ENCODE measurements at regions of chr6 and their contacts with region 1.

Region 1: DNA sequence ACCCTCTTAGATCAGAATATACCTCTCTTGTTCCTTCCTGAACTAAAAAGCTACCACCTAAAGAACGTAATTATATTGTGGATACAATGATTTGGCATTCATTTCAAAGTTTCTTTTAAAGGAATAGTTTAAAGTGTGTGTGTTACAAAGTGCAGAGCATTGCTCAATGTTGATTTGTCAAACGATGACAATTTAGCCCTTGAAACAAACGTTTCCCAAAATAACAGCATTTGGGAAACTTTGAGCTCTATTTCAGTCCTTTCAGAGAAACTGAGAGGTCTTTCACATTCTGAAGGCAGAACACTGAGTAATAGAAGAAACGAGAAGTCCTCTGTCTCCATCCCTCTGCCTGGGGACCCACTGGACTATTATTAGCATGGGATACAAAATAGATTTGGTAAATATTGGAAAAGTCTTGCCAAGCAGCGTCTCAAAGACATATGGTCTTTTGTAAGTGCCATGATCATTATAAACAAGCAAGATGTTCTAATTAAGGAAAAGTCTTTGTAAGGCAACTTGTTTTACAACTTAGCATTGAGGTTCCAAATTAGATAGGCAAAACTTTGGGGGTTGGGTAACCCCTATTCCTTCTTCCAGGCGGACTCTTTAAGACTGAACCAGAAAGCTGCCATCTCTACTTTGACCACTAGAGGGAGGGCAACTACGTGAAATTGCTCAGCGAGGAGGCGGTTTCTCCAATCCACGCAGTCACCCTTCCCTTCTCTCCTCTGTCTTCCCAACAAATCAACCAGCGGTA is 208.8 kb downstream of the RNF144B start:
- DNase-seq: no peak
- ATAC-seq: peak; percentile 89
- H3K4me3 ChIP-seq: no peak overlapping the region
- H3K27ac ChIP-seq: no peak overlapping the region
- H3K4me1 ChIP-seq: no peaks in the 10 kb centered on the region
- H3K27me3 ChIP-seq: no peaks in the 10 kb centered on the region
- CTCF ChIP-seq: peak; percentile 84 to 95 (median 92)
- EP300 ChIP-seq: no peak
- POLR2A ChIP-seq: no peak
- RAD21 ChIP-seq: peak; percentile 78

Region 2: DNA sequence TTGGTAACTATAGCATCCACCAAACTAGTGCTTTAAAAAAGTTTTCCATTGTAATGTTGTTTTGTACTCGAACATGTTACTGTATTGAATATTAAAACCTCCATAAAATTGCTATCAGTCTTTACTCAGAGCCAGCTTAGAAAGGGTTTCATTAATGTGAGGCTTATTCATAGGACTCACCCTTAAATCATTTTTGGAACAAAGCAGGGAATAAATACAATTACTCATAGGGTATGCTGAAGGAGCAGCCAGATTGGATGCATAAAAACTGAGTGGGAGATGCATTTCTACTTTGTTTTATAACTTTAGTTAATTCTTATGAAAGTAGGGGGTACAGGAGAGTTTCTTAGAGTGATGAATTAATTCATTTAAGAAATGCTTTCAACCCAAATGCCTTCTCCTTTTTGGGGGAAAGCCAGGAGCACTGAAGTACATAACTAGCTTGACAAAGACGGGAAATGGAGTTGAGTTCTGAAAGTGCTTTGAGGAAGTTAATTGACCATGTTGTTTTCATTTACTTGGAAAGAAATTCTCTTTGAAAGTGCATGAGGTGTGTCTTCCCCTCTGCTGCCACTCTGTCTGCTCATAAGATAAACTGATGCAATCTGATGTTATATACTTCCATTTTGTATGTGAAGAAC is 118.5 kb before region 1 on chr6:
- CTCF ChIA-PET with region 1: no interaction called
- POLR2A ChIA-PET with region 1: no interaction called
- RAD21 ChIA-PET with region 1: no interaction called
- SMC1A ChIA-PET with region 1: no interaction called
- in situ Hi-C with region 1: no loop called
- intact Hi-C with region 1: no loop called
- DNase-seq: no peak
- ATAC-seq: 0 out of 3 replicates have a peak, but pooled peaks have one; percentile 24
- H3K4me3 ChIP-seq: no peak overlapping the region
- H3K27ac ChIP-seq: no peak overlapping the region
- H3K4me1 ChIP-seq: no peaks in the 10 kb centered on the region
- H3K27me3 ChIP-seq: no peaks in the 10 kb centered on the region; a peak in 1 of 4 replicates
- CTCF ChIP-seq: no peak
- EP300 ChIP-seq: no peak
- POLR2A ChIP-seq: no peak
- RAD21 ChIP-seq: no peak

Region 3: GRCh38 chr6:18579869-18580268 is 16.1 kb before region 1 on chr6:
- CTCF ChIA-PET with region 1: interaction called, 14 read pairs
- POLR2A ChIA-PET with region 1: interaction called, 4 read pairs
- RAD21 ChIA-PET with region 1: interaction called, 4 read pairs
- SMC1A ChIA-PET with region 1: interaction called, 3 read pairs
- in situ Hi-C with region 1: no loop called
- intact Hi-C with region 1: no loop called
- DNase-seq: no peak
- ATAC-seq: peak; percentile 48
- H3K4me3 ChIP-seq: no peak overlapping the region
- H3K27ac ChIP-seq: no peak overlapping the region
- H3K4me1 ChIP-seq: no peaks in the 10 kb centered on the region
- H3K27me3 ChIP-seq: no peaks in the 10 kb centered on the region; a peak in 2 of 4 replicates
- CTCF ChIP-seq: no peak
- EP300 ChIP-seq: no peak
- POLR2A ChIP-seq: no peak
- RAD21 ChIP-seq: no peak

Region 4: DNA sequence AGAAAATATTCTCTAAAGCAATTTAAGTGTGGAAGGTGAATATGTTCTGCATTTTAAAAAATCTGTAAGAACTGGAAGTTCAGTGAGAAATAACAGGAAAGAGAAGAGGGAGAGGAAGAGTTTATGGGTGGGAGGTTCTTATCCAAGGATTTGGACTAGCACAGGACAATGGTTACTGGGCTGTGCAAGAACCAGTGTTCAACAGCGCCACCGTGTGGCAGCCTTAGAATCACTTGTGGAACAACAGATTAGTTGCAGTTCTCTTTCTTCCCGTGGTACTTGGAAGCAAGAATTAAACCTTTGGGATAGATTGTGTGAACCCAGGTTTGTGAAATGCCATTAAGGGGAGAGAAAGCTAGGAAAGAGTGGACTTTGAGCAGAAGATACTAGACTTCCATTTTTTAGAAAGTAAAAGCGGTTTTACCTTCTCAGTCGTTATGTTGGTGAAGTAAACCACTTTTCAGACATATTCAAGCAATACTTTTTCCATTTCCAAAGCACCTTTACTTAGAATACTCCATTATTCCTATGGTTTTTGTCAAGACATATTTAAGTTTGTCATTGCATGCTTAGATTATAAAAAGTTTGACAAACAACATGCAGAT is 227.9 kb after region 1 on chr6:
- CTCF ChIA-PET with region 1: interaction called, 6 read pairs
- POLR2A ChIA-PET with region 1: no interaction called
- RAD21 ChIA-PET with region 1: no interaction called
- SMC1A ChIA-PET with region 1: no interaction called
- in situ Hi-C with region 1: no loop called
- intact Hi-C with region 1: loop called (anchors 1 kb)
- DNase-seq: no peak
- ATAC-seq: no peak
- H3K4me3 ChIP-seq: no peak overlapping the region
- H3K27ac ChIP-seq: no peak overlapping the region
- H3K4me1 ChIP-seq: no peaks in the 10 kb centered on the region
- H3K27me3 ChIP-seq: no peaks in the 10 kb centered on the region
- CTCF ChIP-seq: peak; percentile 35 to 49 (median 41); a peak in 5 of 6 replicates
- EP300 ChIP-seq: no peak
- POLR2A ChIP-seq: no peak
- RAD21 ChIP-seq: no peak

Region 5: DNA sequence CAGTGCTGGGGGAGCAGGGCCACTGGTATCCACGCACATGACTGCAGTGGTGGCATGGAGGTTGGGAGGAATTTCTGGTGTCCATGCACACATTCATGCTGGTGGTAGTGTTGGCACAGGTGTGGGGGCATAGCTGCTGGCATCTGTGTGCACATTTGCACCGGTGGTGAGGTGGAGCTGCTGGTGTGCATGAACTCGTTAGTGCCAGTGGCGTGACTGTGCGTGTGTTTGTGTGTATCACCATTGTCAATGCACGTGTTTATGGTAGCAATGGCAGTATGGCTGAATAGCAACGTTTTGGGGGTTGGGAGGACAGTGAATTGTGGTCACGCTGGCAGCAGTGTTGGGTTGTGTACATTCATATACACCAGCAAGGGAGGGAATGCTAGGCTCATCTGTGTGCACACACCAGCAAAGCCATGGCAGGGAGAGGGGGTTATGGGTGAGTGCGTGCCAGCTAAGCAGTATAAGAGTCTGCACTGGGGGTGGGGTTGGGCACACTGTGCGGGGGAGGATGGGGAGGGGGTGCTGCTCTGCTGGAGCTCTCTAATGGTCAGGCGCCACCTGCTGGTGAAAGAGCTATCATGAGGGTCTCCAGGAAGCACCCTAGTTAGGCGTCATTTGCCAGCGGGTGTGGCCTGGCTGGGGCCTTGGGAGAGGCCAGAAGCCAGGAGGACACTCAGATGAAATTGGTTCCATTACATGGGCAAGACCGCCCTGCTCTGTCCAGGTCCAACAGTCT is 615.1 kb after region 1 on chr6:
- CTCF ChIA-PET with region 1: interaction called, 8 read pairs
- POLR2A ChIA-PET with region 1: no interaction called
- RAD21 ChIA-PET with region 1: interaction called, 5 read pairs
- SMC1A ChIA-PET with region 1: no interaction called
- in situ Hi-C with region 1: no loop called
- intact Hi-C with region 1: loop called (anchors 5 kb)
- DNase-seq: no peak
- ATAC-seq: peak; percentile 56
- H3K4me3 ChIP-seq: no peak overlapping the region
- H3K27ac ChIP-seq: no peak overlapping the region
- H3K4me1 ChIP-seq: no peaks in the 10 kb centered on the region
- H3K27me3 ChIP-seq: no peaks in the 10 kb centered on the region
- CTCF ChIP-seq: peak in 2 of 3 experiments; percentile 14 to 32; a peak in 3 of 6 replicates
- EP300 ChIP-seq: no peak
- POLR2A ChIP-seq: no peak
- RAD21 ChIP-seq: no peak

Measured in GM12878 (cell line).